PC-3 (cell line): ENCODE measurements at regions of chr19 and their contacts with region 1.

Region 1: DNA sequence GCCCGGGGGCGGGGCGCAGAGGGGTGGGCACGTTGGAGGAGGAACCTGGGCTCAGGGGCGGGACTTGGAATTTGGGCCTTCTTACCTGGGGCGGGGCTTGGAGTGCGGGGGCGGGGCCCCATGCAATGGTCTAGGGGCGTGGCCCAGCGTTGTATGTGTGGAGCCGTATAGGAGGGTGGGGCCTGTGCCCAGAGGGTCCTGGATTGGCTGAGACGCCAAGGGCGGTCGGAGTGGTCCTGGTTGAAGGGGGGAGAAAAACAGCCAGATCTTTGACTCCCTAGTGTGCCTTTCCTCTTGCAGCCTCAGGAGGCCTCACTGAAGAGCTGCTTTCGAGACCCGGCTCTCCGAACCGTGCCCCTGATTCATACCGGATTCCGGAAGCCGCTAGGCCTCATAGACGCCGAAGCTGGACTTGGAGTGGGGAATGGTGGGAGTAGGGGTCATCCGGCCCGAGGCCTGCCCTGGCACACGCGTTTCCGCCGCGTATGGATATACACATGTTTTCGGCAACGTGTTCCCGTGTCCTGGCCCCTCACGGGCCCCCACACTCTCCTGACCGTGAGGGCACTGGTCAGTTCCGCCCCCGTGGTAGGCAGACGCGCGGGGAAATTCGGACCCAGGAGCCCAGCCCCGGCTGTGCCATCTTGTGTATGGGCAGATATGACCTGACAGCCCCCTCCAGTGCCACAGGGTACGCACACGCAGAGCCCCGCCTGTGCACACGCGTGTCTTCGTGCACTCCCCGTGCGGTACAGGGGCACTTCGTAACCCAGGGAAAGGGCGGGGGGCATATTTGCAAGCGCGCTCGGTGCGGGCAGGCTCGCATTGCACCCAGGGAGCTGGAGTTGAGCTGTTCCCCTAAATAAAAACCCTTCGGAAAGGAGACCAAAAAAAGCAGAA is 661 bp upstream of the PRR12 start:
- DNase-seq: peak; percentile 99
- ATAC-seq: peak; percentile 77
- H3K4me3 ChIP-seq: peak overlapping the region; percentile 70
- H3K27ac ChIP-seq: peak overlapping the region; percentile 85
- H3K4me1 ChIP-seq: peaks cover 7% of the 10 kb centered on the region; the same call in 1 of the 2 replicates
- H3K27me3 ChIP-seq: no peaks in the 10 kb centered on the region
- CTCF ChIP-seq: no peak

Region 2: GRCh38 chr19:49533551-49534488 is 56.5 kb before region 1 on chr19:
- CTCF ChIA-PET with region 1: no interaction called
- POLR2A ChIA-PET with region 1: no interaction called
- intact Hi-C with region 1: no loop called
- DNase-seq: peak; percentile 68
- ATAC-seq: peak; percentile 87
- H3K4me3 ChIP-seq: peak overlapping the region; percentile 84
- H3K27ac ChIP-seq: no peak overlapping the region
- H3K4me1 ChIP-seq: peaks cover 11% of the 10 kb centered on the region; the same call in 1 of the 2 replicates
- H3K27me3 ChIP-seq: no peaks in the 10 kb centered on the region
- CTCF ChIP-seq: peak; percentile 51

Region 3: GRCh38 chr19:49614096-49614833 is 23.9 kb after region 1 on chr19:
- CTCF ChIA-PET with region 1: interaction called, 9 read pairs
- POLR2A ChIA-PET with region 1: interaction called, 3 read pairs
- intact Hi-C with region 1: loop called (anchors 1 kb)
- DNase-seq: peak; percentile 97
- ATAC-seq: peak; percentile 92
- H3K4me3 ChIP-seq: peak overlapping the region; percentile 39
- H3K27ac ChIP-seq: peak overlapping the region; percentile 92
- H3K4me1 ChIP-seq: peaks cover 29% of the 10 kb centered on the region
- H3K27me3 ChIP-seq: no peaks in the 10 kb centered on the region
- CTCF ChIP-seq: peak; percentile 45; the same call in 1 of the 2 replicates

Region 4: DNA sequence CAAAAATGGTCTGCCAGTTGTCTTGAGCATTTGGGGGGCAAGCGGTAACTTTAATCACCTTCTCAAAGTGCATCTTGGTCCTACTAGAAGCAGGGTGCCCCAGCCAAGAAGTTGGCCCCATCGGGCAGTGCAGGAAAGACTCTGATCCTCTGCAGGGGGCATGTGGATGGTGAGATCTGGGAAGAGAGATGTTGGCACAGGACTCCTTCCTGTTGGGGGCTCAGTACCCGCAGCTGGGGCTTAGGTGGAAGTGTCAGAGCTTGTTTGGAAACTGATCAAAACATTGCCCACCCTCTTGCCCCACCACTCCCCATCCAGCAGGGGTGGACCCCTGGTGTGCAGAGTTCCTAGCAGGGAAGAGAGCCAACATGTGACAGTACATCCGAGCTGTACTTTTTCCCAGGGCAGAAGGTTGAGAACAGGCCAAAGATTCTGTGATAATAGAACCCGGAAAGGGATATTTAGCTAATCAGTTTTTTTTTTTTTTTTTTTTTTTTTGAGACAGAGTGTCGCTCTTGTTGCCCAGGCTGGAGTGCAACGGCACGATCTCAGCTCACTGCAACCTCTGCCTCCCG is 40.8 kb after region 1 on chr19:
- CTCF ChIA-PET with region 1: no interaction called
- POLR2A ChIA-PET with region 1: no interaction called
- intact Hi-C with region 1: no loop called
- DNase-seq: no peak
- ATAC-seq: peak; percentile 23
- H3K4me3 ChIP-seq: no peak overlapping the region
- H3K27ac ChIP-seq: no peak overlapping the region
- H3K4me1 ChIP-seq: no peaks in the 10 kb centered on the region
- H3K27me3 ChIP-seq: no peaks in the 10 kb centered on the region
- CTCF ChIP-seq: no peak

Region 5: GRCh38 chr19:49665351-49666119 is 75.2 kb after region 1 on chr19 and contains the starts of genes BCL2L12 and IRF3:
- CTCF ChIA-PET with region 1: no interaction called
- POLR2A ChIA-PET with region 1: no interaction called
- intact Hi-C with region 1: loop called (anchors 2 kb)
- DNase-seq: peak; percentile 100
- ATAC-seq: peak; percentile 80
- H3K4me3 ChIP-seq: peak within 1 kb of the TSS; percentile 89
- H3K27ac ChIP-seq: peak within 1 kb of the TSS; percentile 60
- H3K4me1 ChIP-seq: peaks cover 18% of the 10 kb centered on the region
- H3K27me3 ChIP-seq: no peaks in the 10 kb centered on the region
- CTCF ChIP-seq: no peak
- total RNA-seq, gene BCL2L12: 82.5 and 104 TPM in 2 replicates
- total RNA-seq, gene IRF3: 223 and 236 TPM in 2 replicates